WTC11 (cell line): ENCODE measurements at regions of chr13 and their contacts with region 1.

Region 1: GRCh38 chr13:108895220-108895704 is 265.9 kb downstream of the MYO16 start:
- DNase-seq: no peak
- ATAC-seq: no peak
- H3K4me3 Mint-ChIP-seq: no peak overlapping the region
- H3K27ac Mint-ChIP-seq: no peak overlapping the region
- H3K4me1 Mint-ChIP-seq: peaks cover 7% of the 10 kb centered on the region; the same call in 1 of the 2 replicates
- H3K27me3 Mint-ChIP-seq: no peaks in the 10 kb centered on the region
- CTCF ChIP-seq: 0 out of 2 replicates have a peak, but pooled peaks have one; percentile 41

Region 2: GRCh38 chr13:108609353-108609752 is 285.9 kb before region 1 on chr13:
- CTCF ChIA-PET with region 1: interaction called, 18 read pairs
- POLR2A ChIA-PET with region 1: no interaction called
- DNase-seq: no peak
- ATAC-seq: peak; percentile 79
- H3K4me3 Mint-ChIP-seq: no peak overlapping the region
- H3K27ac Mint-ChIP-seq: no peak overlapping the region
- H3K4me1 Mint-ChIP-seq: no peaks in the 10 kb centered on the region
- H3K27me3 Mint-ChIP-seq: peaks cover 3% of the 10 kb centered on the region
- CTCF ChIP-seq: peak; percentile 31; the same call in 1 of the 2 replicates

Region 3: GRCh38 chr13:108915634-108916512 is 20.6 kb after region 1 on chr13:
- CTCF ChIA-PET with region 1: interaction called, 11 read pairs
- POLR2A ChIA-PET with region 1: no interaction called
- DNase-seq: peak; percentile 47
- ATAC-seq: no peak; the same call in 1 of the 2 replicates
- H3K4me3 Mint-ChIP-seq: no peak overlapping the region
- H3K27ac Mint-ChIP-seq: 0 out of 2 replicates have a peak overlapping the region, but pooled peaks have one; percentile 25
- H3K4me1 Mint-ChIP-seq: peaks cover 26% of the 10 kb centered on the region
- H3K27me3 Mint-ChIP-seq: no peaks in the 10 kb centered on the region
- CTCF ChIP-seq: no peak